Activated CD8-positive, alpha-beta T cell treated with anti-CD3 and anti-CD28 coated beads, Interleukin-2, amount 10 ng/mL, durations not matched to agents 7 days and 5 days (primary cell): ENCODE measurements at regions of chr1 and their contacts with region 1.

Region 1: DNA sequence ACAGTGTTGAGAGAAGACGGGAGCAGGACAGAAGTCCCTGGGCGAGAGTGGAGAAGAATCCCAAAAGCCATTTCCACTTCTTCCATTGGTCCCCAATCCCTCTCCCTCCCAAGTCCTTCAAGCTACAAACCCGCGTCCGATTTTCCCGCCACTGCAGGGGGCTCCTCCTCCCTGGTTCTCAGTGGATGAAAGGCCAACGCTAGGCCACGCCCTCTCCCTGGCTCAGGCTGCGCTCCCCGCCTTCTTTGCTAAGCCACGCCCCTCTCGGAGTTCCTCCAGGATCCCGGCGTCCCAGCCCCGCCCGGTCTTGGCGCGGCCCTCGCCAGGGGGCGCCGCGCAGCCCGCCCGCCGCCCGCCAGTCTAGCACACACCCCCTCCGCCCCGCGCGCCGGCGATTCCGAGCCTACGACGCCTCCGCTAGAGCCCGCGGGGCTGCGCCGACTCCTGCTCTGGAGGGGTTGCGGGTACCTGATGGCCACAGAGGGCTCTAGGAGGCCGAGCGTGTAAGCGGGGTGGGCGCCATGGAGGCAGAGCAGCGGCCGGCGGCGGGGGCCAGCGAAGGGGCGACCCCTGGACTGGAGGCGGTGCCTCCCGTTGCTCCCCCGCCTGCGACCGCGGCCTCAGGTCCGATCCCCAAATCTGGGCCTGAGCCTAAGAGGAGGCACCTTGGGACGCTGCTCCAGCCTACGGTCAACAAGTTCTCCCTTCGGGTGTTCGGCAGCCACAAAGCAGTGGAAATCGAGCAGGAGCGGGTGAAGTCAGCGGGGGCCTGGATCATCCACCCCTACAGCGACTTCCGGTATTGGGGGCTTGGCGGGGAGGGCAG is at the start of gene HCN3:
- DNase-seq: peak; percentile 95
- ATAC-seq: peak; percentile 71
- H3K4me3 Mint-ChIP-seq: peak within 1 kb of the TSS; percentile 67
- H3K27ac Mint-ChIP-seq: peak within 1 kb of the TSS; percentile 1
- H3K4me1 Mint-ChIP-seq: peaks cover 32% of the 10 kb centered on the region
- H3K27me3 Mint-ChIP-seq: no peaks in the 10 kb centered on the region
- total RNA-seq, gene HCN3: 4.9 to 5.1 TPM

Region 2: GRCh38 chr1:155134858-155135414 is 142.3 kb before region 1 on chr1:
- CTCF ChIA-PET with region 1: no interaction called
- POLR2A ChIA-PET with region 1: no interaction called
- DNase-seq: peak; percentile 36
- ATAC-seq: no peak
- H3K4me3 Mint-ChIP-seq: peak overlapping the region; percentile 98
- H3K27ac Mint-ChIP-seq: peak overlapping the region; percentile 99
- H3K4me1 Mint-ChIP-seq: peaks cover 43% of the 10 kb centered on the region
- H3K27me3 Mint-ChIP-seq: no peaks in the 10 kb centered on the region

Region 3: DNA sequence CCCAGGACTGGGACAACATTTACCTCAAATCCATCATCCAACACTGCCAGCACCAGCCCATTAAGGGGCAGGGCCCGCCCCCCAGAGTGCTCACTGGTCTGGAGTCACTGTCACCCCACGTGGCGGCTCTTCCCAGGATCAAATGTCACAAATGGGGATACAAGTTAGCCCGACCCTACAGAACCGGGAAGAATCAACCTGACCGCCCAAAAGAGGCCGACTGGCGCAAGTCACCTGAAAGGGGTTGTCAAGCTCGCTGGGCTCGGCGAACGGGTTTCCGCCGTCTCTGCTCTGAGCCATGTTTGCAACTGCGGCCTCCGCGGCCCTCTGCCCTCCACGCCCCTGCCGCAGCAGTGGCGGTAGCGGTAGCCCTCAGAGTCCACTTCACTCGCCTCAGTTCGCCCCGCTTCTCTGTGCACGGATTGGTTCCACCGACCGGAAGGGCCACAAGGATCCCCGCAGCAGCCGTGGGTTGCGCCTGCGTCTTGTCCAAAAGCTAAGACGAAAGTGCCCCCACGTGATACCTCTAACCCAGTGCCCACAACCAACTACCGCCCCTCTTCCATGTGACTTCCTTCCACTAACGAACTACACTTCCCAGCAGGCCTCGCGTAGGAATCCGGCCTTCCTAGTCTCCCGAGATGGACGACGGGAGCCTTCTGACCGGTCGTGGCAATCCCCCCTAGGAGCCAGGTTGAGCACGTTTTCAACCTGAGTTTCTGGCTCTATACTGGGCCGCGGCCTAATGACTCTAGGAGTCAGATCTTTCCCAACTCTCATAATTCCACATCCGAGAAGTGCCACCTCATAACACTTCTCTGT is 15.2 kb before region 1 on chr1 and contains the start of gene SCAMP3:
- CTCF ChIA-PET with region 1: interaction called, 6 read pairs
- POLR2A ChIA-PET with region 1: interaction called, 21 read pairs
- DNase-seq: peak; percentile 94
- ATAC-seq: peak; percentile 95
- H3K4me3 Mint-ChIP-seq: peak within 1 kb of the TSS; percentile 98
- H3K27ac Mint-ChIP-seq: peak within 1 kb of the TSS; percentile 93
- H3K4me1 Mint-ChIP-seq: peaks cover 42% of the 10 kb centered on the region
- H3K27me3 Mint-ChIP-seq: no peaks in the 10 kb centered on the region
- total RNA-seq, gene SCAMP3: 77.9 to 84.2 TPM

Region 4: GRCh38 chr1:155308493-155309422 is 31.5 kb after region 1 on chr1 and contains the start of gene FDPS:
- CTCF ChIA-PET with region 1: interaction called, 13 read pairs
- POLR2A ChIA-PET with region 1: interaction called, 7 read pairs
- DNase-seq: peak; percentile 99
- ATAC-seq: peak; percentile 99
- H3K4me3 Mint-ChIP-seq: peak within 1 kb of the TSS; percentile 98
- H3K27ac Mint-ChIP-seq: peak within 1 kb of the TSS; percentile 93
- H3K4me1 Mint-ChIP-seq: peaks cover 42% of the 10 kb centered on the region
- H3K27me3 Mint-ChIP-seq: no peaks in the 10 kb centered on the region
- total RNA-seq, gene FDPS: 270 to 271 TPM

Region 5: DNA sequence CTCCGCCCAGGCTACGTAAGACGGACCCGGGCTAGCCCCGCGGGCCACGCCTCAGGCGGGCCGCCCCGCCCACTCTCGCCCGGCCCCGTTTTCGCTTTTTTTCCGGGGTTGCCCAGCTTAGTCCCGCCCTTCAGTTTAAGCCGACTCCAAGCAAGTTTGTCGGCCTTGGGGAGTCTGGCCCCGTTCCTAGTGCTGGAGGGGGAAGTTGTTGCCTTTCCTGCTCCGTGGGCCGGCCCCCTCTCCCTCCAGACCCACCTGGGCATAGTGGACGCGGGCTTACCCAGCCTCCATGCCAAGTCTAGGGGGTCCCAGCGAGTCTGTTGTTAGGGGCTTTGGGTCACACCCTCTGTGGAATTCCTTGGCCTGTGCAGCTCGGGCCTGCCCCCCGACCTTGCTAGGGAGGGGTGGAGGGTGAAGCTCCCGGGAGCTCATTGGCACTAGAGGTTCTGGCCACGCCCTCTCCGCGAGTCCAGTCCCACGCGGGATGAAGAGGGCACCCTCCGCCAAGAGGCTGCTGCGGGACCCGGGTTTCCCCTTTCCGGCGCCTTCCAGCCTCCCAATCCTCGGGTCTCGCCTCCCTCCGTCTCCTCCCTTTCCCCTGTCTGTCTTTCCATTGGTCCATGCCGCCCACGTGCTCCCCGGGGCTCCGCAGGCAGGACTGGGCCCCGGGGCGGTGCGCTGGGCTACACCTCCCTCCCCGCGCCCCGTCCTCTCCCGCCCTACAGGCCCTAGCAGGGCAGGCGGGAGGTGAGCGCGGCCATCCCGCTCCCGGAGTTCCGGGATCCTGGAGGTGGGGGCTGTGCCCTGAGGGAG is 46.7 kb after region 1 on chr1:
- CTCF ChIA-PET with region 1: interaction called, 34 read pairs
- POLR2A ChIA-PET with region 1: interaction called, 7 read pairs
- DNase-seq: peak; percentile 93
- ATAC-seq: peak; percentile 86
- H3K4me3 Mint-ChIP-seq: peak overlapping the region; percentile 83
- H3K27ac Mint-ChIP-seq: peak overlapping the region; percentile 77
- H3K4me1 Mint-ChIP-seq: peaks cover 47% of the 10 kb centered on the region
- H3K27me3 Mint-ChIP-seq: no peaks in the 10 kb centered on the region